Activated CD4-positive, alpha-beta memory T cell treated with anti-CD3 and anti-CD28 coated beads for 36 hours (primary cell): ENCODE measurements at regions of chr14 and their contacts with region 1.

Region 1: GRCh38 chr14:54805521-54806322 is 96.9 kb downstream of the GCH1 start:
- DNase-seq: peak; percentile 86
- H3K4me3 Mint-ChIP-seq: no peak overlapping the region
- H3K27ac Mint-ChIP-seq: no peak overlapping the region
- H3K4me1 Mint-ChIP-seq: peaks cover 13% of the 10 kb centered on the region
- H3K27me3 Mint-ChIP-seq: peaks cover 21% of the 10 kb centered on the region

Region 2: DNA sequence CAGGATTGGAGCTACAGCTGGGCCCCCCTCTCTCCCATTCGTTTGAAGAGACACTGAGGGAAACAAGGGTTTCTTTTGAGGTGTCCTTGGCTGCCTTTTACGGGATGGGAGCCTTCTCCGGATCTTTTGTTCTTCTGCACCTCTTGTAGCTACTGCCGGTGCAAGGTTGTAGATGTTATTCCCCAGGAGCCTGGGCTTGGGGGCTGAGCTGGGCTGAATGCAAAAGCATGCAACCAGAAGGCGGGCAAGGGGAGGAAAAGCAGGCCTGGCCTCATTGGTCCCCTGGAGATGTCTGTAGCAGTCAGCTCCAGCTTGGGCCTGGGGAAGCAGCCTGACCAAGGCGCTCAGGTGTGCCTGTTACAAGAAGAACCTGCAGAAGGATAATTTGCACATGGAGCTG is 13.4 kb before region 1 on chr14:
- CTCF ChIA-PET with region 1: interaction called, 26 read pairs
- POLR2A ChIA-PET with region 1: interaction called, 3 read pairs
- intact Hi-C with region 1: no loop called
- DNase-seq: no peak
- H3K4me3 Mint-ChIP-seq: no peak overlapping the region
- H3K27ac Mint-ChIP-seq: no peak overlapping the region
- H3K4me1 Mint-ChIP-seq: no peaks in the 10 kb centered on the region
- H3K27me3 Mint-ChIP-seq: no peaks in the 10 kb centered on the region

Region 3: DNA sequence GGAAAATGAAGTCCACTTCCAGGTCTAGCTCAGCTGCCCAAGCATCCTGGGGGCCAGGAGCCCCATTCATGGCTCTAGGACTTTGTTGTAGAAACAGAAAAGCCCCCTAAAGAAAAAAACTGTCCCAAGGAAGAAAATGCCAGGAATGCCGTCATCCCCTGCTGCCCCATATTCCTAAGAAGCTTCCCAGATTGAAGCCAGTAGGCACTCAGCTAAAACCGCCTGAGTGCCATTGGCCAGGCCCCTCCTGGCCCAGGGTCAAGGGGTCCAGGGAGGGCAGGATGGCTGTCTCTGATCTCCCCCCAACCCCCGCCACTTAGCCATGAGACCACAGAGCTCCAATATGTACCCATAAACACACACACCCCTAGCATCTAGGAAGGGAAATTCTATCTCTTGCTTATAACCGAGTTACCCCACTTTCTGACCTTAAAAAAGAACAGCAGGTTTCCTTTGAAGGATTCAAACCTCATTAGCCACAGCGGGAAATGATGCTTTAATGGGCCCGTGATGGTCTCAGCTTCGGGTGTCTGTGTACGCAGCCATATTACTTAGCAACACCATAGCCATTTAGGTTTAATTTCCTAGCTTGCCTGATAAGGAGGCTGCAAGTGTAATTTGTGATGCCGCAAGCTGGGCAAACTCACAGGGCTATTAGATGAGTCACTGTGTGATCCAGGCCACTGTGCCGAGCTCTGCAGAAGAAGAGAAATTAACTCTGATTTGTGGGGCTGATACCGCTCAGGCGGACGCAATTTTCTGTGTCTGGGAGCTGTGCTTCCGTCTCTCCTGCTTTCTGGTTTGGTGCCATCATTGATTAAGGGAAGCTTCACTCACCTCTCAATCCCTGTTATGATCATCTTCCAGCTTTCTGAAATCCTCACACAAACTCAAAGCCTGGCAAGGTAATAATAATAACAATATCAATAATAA is 12.7 kb after region 1 on chr14:
- CTCF ChIA-PET with region 1: interaction called, 20 read pairs
- POLR2A ChIA-PET with region 1: no interaction called
- intact Hi-C with region 1: no loop called
- DNase-seq: no peak
- H3K4me3 Mint-ChIP-seq: no peak overlapping the region
- H3K27ac Mint-ChIP-seq: no peak overlapping the region
- H3K4me1 Mint-ChIP-seq: no peaks in the 10 kb centered on the region
- H3K27me3 Mint-ChIP-seq: peaks cover 6% of the 10 kb centered on the region

Region 4: GRCh38 chr14:54866588-54866987 is 60.9 kb after region 1 on chr14:
- CTCF ChIA-PET with region 1: no interaction called
- POLR2A ChIA-PET with region 1: no interaction called
- intact Hi-C with region 1: no loop called
- DNase-seq: no peak
- H3K4me3 Mint-ChIP-seq: no peak overlapping the region
- H3K27ac Mint-ChIP-seq: no peak overlapping the region
- H3K4me1 Mint-ChIP-seq: peaks cover 20% of the 10 kb centered on the region
- H3K27me3 Mint-ChIP-seq: no peaks in the 10 kb centered on the region